GM23248 (cell line): ENCODE measurements at regions of chr19 and their contacts with region 1.

Region 1: GRCh38 chr19:29771708-29772414 is 39.9 kb upstream of the CCNE1 start:
- DNase-seq: peak; percentile 81
- H3K4me3 ChIP-seq: no peak overlapping the region
- H3K27ac ChIP-seq: no peak overlapping the region
- H3K4me1 ChIP-seq: no peaks in the 10 kb centered on the region
- H3K27me3 ChIP-seq: no peaks in the 10 kb centered on the region

Region 2: GRCh38 chr19:29873024-29873800 is 101.4 kb after region 1 on chr19:
- in situ Hi-C with region 1: loop called (anchors 25 kb)
- DNase-seq: peak; percentile 57
- H3K4me3 ChIP-seq: peak overlapping the region; percentile 58
- H3K27ac ChIP-seq: no peak overlapping the region
- H3K4me1 ChIP-seq: no peaks in the 10 kb centered on the region
- H3K27me3 ChIP-seq: no peaks in the 10 kb centered on the region